ENCODE measurements at regions of chr11 and their contacts with region 1.

Region 1: GRCh38 chr11:447923-448731 is 2.0 kb upstream of the PTDSS2 start:
- DNase-seq: peak; percentile 94 to 96
- ATAC-seq: peak; percentile 77 to 82
- H3K4me3 ChIP-seq: peak overlapping the region; percentile 48
- H3K27ac ChIP-seq: peak overlapping the region; percentile 77 to 93
- H3K4me1 ChIP-seq: peaks cover 18% of the 10 kb centered on the region
- CTCF ChIP-seq: peak; percentile 91
- EP300 ChIP-seq: no peak
- POLR2A ChIP-seq: peak; percentile 46
- RAD21 ChIP-seq: peak; percentile 87 to 90

Region 2: GRCh38 chr11:299951-300735 is 148.0 kb before region 1 on chr11:
- CTCF ChIA-PET with region 1: interaction called, 33 read pairs
- POLR2A ChIA-PET with region 1: no interaction called
- DNase-seq: no peak
- ATAC-seq: peak in 1 of 2 experiments; percentile 28; a peak in 3 of 6 replicates
- H3K4me3 ChIP-seq: no peak overlapping the region
- H3K27ac ChIP-seq: 0 out of 6 replicates have a peak overlapping the region, but pooled peaks of 1 of the 2 experiments have one; percentile 19
- H3K4me1 ChIP-seq: no peaks in the 10 kb centered on the region
- CTCF ChIP-seq: no peak
- EP300 ChIP-seq: no peak
- POLR2A ChIP-seq: no peak
- RAD21 ChIP-seq: no peak

Region 3: DNA sequence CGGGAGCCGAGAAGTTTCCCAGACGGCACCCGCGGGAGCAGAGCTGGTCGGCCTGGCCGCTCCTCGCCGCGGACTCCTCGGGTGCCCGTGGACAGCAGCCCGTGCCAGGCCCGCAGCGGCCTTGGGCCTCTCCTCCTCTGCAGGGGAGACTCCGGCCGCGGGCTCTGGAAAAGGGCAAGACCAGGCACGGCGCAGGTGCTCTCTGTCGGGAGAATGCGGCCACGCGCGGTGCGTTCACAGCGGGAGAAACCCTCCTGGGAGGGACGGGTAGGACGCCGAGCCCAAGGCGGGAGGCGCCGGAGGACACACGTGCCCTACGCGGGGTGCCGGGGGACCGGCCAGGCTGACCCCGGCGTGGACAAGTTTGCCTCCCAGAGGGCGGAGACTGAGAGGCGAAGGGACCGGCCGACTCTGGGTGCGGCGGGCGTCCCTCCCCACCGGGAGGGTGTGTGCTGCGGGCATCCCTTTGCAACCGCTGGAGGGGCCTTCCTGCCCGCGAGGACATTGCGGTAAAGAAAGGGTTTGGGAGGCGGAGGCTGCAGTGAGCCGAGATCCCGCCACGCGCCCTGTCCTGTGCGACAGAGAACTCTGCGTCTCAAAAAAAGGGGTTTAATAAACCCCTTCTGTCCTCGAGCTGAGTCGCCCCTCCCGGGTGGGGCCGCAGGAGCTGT is 132.0 kb before region 1 on chr11:
- CTCF ChIA-PET with region 1: interaction called, 11 read pairs
- POLR2A ChIA-PET with region 1: no interaction called
- DNase-seq: no peak
- ATAC-seq: no peak
- H3K4me3 ChIP-seq: no peak overlapping the region
- H3K27ac ChIP-seq: no peak overlapping the region
- H3K4me1 ChIP-seq: peaks cover 9% of the 10 kb centered on the region; the same call in 1 of the 3 replicates
- CTCF ChIP-seq: no peak
- EP300 ChIP-seq: no peak
- POLR2A ChIP-seq: no peak
- RAD21 ChIP-seq: no peak

Region 4: GRCh38 chr11:406978-407739 is 41.0 kb before region 1 on chr11:
- CTCF ChIA-PET with region 1: interaction called, 112 read pairs
- POLR2A ChIA-PET with region 1: interaction called, 30 read pairs
- DNase-seq: peak; percentile 63 to 90
- ATAC-seq: peak; percentile 52 to 81
- H3K4me3 ChIP-seq: peak overlapping the region; percentile 56
- H3K27ac ChIP-seq: peak overlapping the region; percentile 84 to 93
- H3K4me1 ChIP-seq: peaks cover 29% of the 10 kb centered on the region
- CTCF ChIP-seq: no peak
- EP300 ChIP-seq: no peak
- POLR2A ChIP-seq: peak; percentile 18; the same call in 1 of the 2 replicates
- RAD21 ChIP-seq: peak in 1 of 2 experiments; percentile 25; a peak in 2 of 5 replicates

Region 5: GRCh38 chr11:460331-461199 is 12.4 kb after region 1 on chr11:
- CTCF ChIA-PET with region 1: interaction called, 67 read pairs
- POLR2A ChIA-PET with region 1: no interaction called
- DNase-seq: peak; percentile 44 to 81
- ATAC-seq: peak; percentile 79 to 83
- H3K4me3 ChIP-seq: no peak overlapping the region
- H3K27ac ChIP-seq: peak overlapping the region; percentile 61 to 79
- H3K4me1 ChIP-seq: peaks cover 20% of the 10 kb centered on the region
- CTCF ChIP-seq: no peak
- EP300 ChIP-seq: no peak
- POLR2A ChIP-seq: no peak
- RAD21 ChIP-seq: no peak

Region 6: GRCh38 chr11:783581-784015 is 335.5 kb after region 1 on chr11:
- CTCF ChIA-PET with region 1: no interaction called
- POLR2A ChIA-PET with region 1: no interaction called
- DNase-seq: peak in 1 of 2 experiments; percentile 50
- ATAC-seq: peak in 1 of 2 experiments; percentile 65; a peak in 3 of 6 replicates
- H3K4me3 ChIP-seq: no peak overlapping the region
- H3K27ac ChIP-seq: no peak overlapping the region
- H3K4me1 ChIP-seq: peaks cover under 1% of the 10 kb centered on the region; the same call in 1 of the 3 replicates
- CTCF ChIP-seq: no peak
- EP300 ChIP-seq: no peak
- POLR2A ChIP-seq: no peak
- RAD21 ChIP-seq: no peak

Measured in A549 (cell line).